ENCODE measurements at regions of chr12 and their contacts with region 1.

Region 1: GRCh38 chr12:110513842-110514241 is 11.7 kb downstream of the RAD9B start:
- DNase-seq: no peak
- ATAC-seq: no peak
- H3K4me3 ChIP-seq: no peak overlapping the region
- H3K4me3 Mint-ChIP-seq: no peak overlapping the region
- H3K27ac ChIP-seq: no peak overlapping the region
- H3K27ac Mint-ChIP-seq: no peak overlapping the region
- H3K4me1 ChIP-seq: no peaks in the 10 kb centered on the region
- H3K4me1 Mint-ChIP-seq: no peaks in the 10 kb centered on the region
- H3K27me3 ChIP-seq: no peaks in the 10 kb centered on the region
- H3K27me3 Mint-ChIP-seq: no peaks in the 10 kb centered on the region
- CTCF ChIP-seq: no peak

Region 2: GRCh38 chr12:110543252-110543959 is 29.6 kb after region 1 on chr12:
- CTCF ChIA-PET with region 1: no interaction called
- POLR2A ChIA-PET with region 1: no interaction called
- intact Hi-C with region 1: loop called in 1 of 2 experiments (anchors 5 kb)
- DNase-seq: no peak
- ATAC-seq: no peak
- H3K4me3 ChIP-seq: no peak overlapping the region
- H3K4me3 Mint-ChIP-seq: no peak overlapping the region
- H3K27ac ChIP-seq: no peak overlapping the region
- H3K27ac Mint-ChIP-seq: peak overlapping the region; percentile 2
- H3K4me1 ChIP-seq: no peaks in the 10 kb centered on the region
- H3K4me1 Mint-ChIP-seq: peaks cover 22% of the 10 kb centered on the region
- H3K27me3 ChIP-seq: no peaks in the 10 kb centered on the region
- H3K27me3 Mint-ChIP-seq: no peaks in the 10 kb centered on the region
- CTCF ChIP-seq: no peak